ENCODE measurements at regions of chr22 and their contacts with region 1.

Region 1: DNA sequence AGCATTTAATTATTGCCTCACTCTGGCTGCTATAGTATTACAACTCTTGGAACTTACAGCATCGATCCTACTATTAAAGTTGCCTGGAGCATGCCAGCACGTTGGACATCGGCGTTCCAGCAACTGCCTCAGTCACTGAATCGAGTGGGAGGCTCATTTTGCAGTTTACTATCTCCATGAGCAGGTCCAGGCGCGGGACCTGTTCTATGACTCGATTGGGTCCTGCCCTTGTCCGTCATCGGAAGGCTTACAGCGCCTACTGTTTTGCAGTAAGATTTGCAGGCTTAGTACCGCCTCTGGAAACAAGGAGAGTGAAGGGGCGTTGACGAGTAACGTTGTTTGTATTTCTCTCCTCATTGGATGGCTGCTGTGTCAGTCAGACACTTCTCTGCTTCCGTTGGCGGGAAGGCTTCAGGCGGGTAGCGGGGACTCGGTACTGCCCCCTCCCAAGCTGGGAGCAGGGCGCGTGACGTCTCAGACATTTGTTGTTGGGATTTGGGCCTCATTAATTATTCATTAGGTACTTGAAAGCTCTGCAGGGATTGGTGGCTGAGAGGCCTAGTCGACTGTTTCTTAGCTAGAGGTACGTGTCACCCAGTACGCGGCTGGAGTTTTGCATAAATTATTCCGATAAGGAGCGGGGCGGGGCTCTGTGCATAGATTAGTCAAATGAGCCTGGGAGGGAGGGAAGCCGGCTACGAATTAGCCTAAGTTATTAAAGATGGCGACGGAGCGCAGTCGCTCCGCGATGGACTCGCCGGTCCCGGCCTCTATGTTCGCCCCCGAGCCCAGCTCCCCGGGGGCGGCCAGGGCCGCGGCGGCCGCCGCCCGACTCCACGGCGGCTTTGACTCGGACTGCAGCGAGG is at the start of gene GTPBP1:
- DNase-seq: peak; percentile 98 to 99
- H3K4me3 ChIP-seq: peak within 1 kb of the TSS; percentile 94 to 99
- H3K27ac ChIP-seq: peak within 1 kb of the TSS; percentile 95 to 99
- H3K4me1 ChIP-seq: peaks cover 6 to 20% of the 10 kb centered on the region in 2 donors
- H3K27me3 ChIP-seq: no peaks in the 10 kb centered on the region
- CTCF ChIP-seq: no peak
- total RNA-seq, gene GTPBP1: 89.5 TPM

Region 2: GRCh38 chr22:38317122-38317994 is 388.1 kb before region 1 on chr22 and contains the start of gene CSNK1E:
- intact Hi-C with region 1: loop called (anchors 5 kb)
- DNase-seq: peak; percentile 31 to 88
- H3K4me3 ChIP-seq: peak within 1 kb of the TSS; percentile 69 to 92
- H3K27ac ChIP-seq: peak within 1 kb of the TSS; percentile 97 to 100
- H3K4me1 ChIP-seq: peaks cover 10 to 37% of the 10 kb centered on the region in 2 donors
- H3K27me3 ChIP-seq: no peaks in the 10 kb centered on the region
- CTCF ChIP-seq: no peak
- total RNA-seq, gene CSNK1E: 185 TPM

Region 3: GRCh38 chr22:38656256-38657044 is 49.0 kb before region 1 on chr22 and contains the starts of genes CBY1 and FAM227A:
- intact Hi-C with region 1: no loop called
- DNase-seq: peak; percentile 43 to 89
- H3K4me3 ChIP-seq: peak within 1 kb of the TSS; percentile 82 to 88
- H3K27ac ChIP-seq: peak within 1 kb of the TSS; percentile 68 to 79
- H3K4me1 ChIP-seq: peaks cover 0 to 9% of the 10 kb centered on the region in 2 donors
- H3K27me3 ChIP-seq: no peaks in the 10 kb centered on the region
- CTCF ChIP-seq: no peak
- total RNA-seq, gene CBY1: 14.0 TPM
- total RNA-seq, gene FAM227A: 0.43 TPM

Region 4: DNA sequence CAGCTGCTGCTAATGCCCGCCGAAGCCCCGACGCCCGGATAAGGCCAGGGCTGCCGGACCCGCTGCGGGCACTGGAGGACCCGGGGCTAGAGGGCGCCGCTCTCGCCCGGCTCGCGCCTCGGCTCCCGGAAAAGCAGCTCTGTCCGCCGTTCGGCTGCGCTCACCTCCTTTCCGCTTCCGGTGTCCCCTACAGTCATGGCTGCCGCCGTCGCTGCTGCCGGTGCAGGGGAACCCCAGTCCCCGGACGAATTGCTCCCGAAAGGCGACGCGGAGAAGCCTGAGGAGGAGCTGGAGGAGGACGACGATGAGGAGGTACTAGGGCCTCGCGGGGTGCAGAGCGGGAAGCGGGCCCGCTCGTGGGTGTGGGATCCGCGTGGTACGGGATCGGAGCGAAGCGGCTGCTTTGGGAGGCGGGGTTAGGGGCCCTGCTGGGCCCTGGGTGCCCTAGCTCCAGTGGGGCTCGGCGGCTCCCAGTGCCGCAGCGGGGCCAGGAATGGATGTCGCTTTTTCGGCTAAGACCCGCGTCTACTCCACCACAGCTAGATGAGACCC is 23.6 kb before region 1 on chr22 and contains the start of gene TOMM22:
- intact Hi-C with region 1: loop called (anchors 2 kb)
- DNase-seq: peak; percentile 12 to 92
- H3K4me3 ChIP-seq: peak within 1 kb of the TSS; percentile 77 to 94
- H3K27ac ChIP-seq: peak within 1 kb of the TSS; percentile 59 to 61
- H3K4me1 ChIP-seq: peaks cover 0 to 3% of the 10 kb centered on the region in 2 donors
- H3K27me3 ChIP-seq: no peaks in the 10 kb centered on the region
- CTCF ChIP-seq: peak; percentile 8 to 76 (median 68)
- total RNA-seq, gene TOMM22: 19.3 TPM

Region 5: GRCh38 chr22:38748487-38749136 is 43.1 kb after region 1 on chr22:
- intact Hi-C with region 1: loop called (anchors 2 kb)
- DNase-seq: no peak
- H3K4me3 ChIP-seq: no peak overlapping the region
- H3K27ac ChIP-seq: no peak overlapping the region
- H3K4me1 ChIP-seq: peaks cover 10 to 13% of the 10 kb centered on the region in 2 donors
- H3K27me3 ChIP-seq: no peaks in the 10 kb centered on the region
- CTCF ChIP-seq: no peak

Measured in ascending aorta (tissue), 2 donors.